ENCODE measurements at regions of chr11 and their contacts with region 1.

Region 1: DNA sequence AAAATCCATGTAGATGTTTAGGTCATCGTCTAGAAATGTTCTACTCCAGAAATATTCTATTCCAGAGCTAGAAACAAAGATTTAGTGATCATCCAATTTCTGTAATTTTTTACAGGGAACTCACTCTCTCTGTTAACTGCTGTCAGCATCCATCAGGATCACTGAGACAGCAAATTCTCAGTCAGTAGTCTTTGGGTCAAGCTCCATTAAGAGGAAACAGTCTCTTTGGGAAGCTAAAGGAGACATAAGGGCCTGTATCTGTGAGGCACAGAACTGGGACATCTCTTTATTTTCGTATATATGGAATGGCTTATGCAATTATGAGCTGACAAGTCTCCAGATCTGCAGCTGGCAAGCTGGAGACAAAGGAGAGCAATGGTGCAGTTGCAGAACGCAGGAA is 48.3 kb downstream of the PIK3C2A start:
- DNase-seq: no peak
- ATAC-seq: no peak
- H3K4me3 ChIP-seq: no peak overlapping the region
- H3K4me3 Mint-ChIP-seq: no peak overlapping the region
- H3K27ac ChIP-seq: no peak overlapping the region
- H3K27ac Mint-ChIP-seq: no peak overlapping the region
- H3K4me1 ChIP-seq: peaks cover 13 to 14% of the 10 kb centered on the region in 2 experiments
- H3K4me1 Mint-ChIP-seq: peaks cover 57 to 59% (median 59%) of the 10 kb centered on the region in 3 donors
- H3K27me3 ChIP-seq: no peaks in the 10 kb centered on the region
- H3K27me3 Mint-ChIP-seq: no peaks in the 10 kb centered on the region

Region 2: GRCh38 chr11:17173332-17173731 is 13.9 kb after region 1 on chr11:
- CTCF ChIA-PET with region 1: no interaction called
- POLR2A ChIA-PET with region 1: no interaction called
- DNase-seq: no peak
- ATAC-seq: no peak
- H3K4me3 ChIP-seq: no peak overlapping the region
- H3K4me3 Mint-ChIP-seq: no peak overlapping the region
- H3K27ac ChIP-seq: no peak overlapping the region
- H3K27ac Mint-ChIP-seq: no peak overlapping the region
- H3K4me1 ChIP-seq: no peaks in the 10 kb centered on the region
- H3K4me1 Mint-ChIP-seq: peaks cover 19 to 27% (median 23%) of the 10 kb centered on the region in 3 donors
- H3K27me3 ChIP-seq: no peaks in the 10 kb centered on the region
- H3K27me3 Mint-ChIP-seq: no peaks in the 10 kb centered on the region

Region 3: DNA sequence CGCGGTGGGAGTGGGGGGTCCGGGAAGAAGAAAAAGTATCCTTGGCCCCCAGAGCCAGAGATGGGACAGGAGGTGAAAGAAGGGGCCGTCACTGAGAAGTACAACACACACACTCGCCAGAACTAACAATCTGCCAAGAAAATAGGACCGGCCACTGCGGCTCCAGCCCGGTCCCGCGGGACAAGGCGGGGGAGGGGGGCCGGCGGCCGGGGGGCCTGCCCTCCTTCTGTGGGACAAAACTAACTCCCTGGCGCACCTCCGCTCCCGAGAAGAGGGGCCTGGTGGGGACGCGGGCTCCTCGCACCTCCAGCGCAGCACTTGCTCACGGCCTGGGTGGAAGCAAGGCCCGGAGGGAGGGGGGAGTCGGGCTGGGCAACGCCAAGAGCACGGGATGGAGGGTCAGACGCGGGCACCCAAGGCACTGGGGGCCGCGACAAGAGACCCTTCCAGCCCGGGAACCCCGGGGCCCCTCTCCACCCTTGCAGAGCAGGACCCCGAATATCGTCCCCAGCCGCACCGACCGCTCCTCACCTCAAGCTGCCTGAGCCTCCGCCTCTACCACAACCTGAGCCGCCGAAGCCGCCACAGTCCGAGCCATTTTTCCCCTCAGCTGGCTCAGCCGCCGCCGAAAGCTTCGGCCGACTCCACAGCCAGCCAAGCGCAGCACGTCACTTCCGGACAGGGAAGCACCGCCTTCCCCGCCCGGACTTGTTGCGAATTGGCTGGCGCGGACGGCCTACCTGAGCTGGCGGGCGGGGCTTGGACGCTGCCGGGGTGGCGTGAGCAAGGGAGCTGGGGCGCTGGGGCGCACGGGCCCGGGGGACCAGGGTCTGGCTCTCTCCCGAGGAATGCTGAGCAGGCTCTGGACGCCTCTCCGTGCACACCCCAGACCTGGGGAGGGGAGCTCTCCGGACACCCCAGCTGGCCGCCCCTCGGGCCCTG is 48.1 kb after region 1 on chr11 and contains the start of gene PIK3C2A:
- CTCF ChIA-PET with region 1: no interaction called
- POLR2A ChIA-PET with region 1: no interaction called
- DNase-seq: peak; percentile 88 to 96 (median 93)
- ATAC-seq: peak; percentile 98
- H3K4me3 ChIP-seq: peak within 1 kb of the TSS; percentile 96 to 100
- H3K4me3 Mint-ChIP-seq: peak within 1 kb of the TSS; percentile 96 to 99 (median 99)
- H3K27ac ChIP-seq: peak within 1 kb of the TSS; percentile 89
- H3K27ac Mint-ChIP-seq: peak within 1 kb of the TSS; percentile 95 to 96
- H3K4me1 ChIP-seq: peaks cover 13 to 22% of the 10 kb centered on the region in 2 experiments
- H3K4me1 Mint-ChIP-seq: peaks cover 46 to 47% (median 47%) of the 10 kb centered on the region in 3 donors
- H3K27me3 ChIP-seq: no peaks in the 10 kb centered on the region
- H3K27me3 Mint-ChIP-seq: no peaks in the 10 kb centered on the region
- total RNA-seq, gene PIK3C2A: 26.3 to 40.6 (median 30.0) TPM

Region 4: DNA sequence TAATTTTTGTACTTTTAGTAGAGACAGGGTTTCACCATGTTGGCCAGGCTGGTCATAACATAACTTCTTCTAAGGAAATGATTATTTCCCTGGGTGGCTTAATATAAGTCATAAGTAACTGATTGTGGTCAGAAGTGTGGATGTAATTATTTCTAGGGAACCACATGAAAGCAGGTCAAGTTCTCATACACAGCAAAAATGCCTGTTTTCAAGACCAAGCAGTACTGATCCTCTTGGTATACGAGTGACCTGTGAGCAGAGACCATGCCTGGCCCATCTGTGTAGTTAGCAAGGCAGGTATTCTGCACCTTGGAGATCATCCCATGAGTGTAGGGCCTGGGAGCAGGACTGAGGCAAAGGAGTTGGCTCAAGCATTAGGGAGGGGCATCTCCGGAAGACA is 84.6 kb after region 1 on chr11:
- CTCF ChIA-PET with region 1: no interaction called
- POLR2A ChIA-PET with region 1: interaction called in 1 of 2 experiments, 10 read pairs
- DNase-seq: no peak
- ATAC-seq: no peak
- H3K4me3 ChIP-seq: no peak overlapping the region
- H3K4me3 Mint-ChIP-seq: no peak overlapping the region
- H3K27ac ChIP-seq: no peak overlapping the region
- H3K27ac Mint-ChIP-seq: no peak overlapping the region
- H3K4me1 ChIP-seq: peaks cover 0 to 7% of the 10 kb centered on the region in 2 experiments
- H3K4me1 Mint-ChIP-seq: peaks cover 0 to 11% (median 2%) of the 10 kb centered on the region in 3 donors
- H3K27me3 ChIP-seq: peaks cover 0 to 4% of the 10 kb centered on the region in 2 experiments
- H3K27me3 Mint-ChIP-seq: peaks cover 3 to 5% of the 10 kb centered on the region in 2 donors

Measured in T-cell (primary cell).